Heart left ventricle (tissue), 16 donors: ENCODE measurements at regions of chr3 and their contacts with region 1.

Region 1: GRCh38 chr3:11601446-11602238 is 42.1 kb downstream of the VGLL4 start:
- DNase-seq: peak in 4 of 5 donors; percentile 68 to 73 (median 71)
- ATAC-seq: peak in 3 of 4 donors; percentile 47 to 59 (median 47)
- H3K4me3 ChIP-seq: peak overlapping the region in 1 of 12 donors; percentile 2
- H3K27ac ChIP-seq: peak overlapping the region in 11 of 12 donors; percentile 72 to 94 (median 81)
- H3K4me1 ChIP-seq: peaks cover 1 to 87% (median 64%) of the 10 kb centered on the region in 12 donors
- H3K27me3 ChIP-seq: no peaks in the 10 kb centered on the region
- CTCF ChIP-seq: no peak
- POLR2A ChIP-seq: no peak

Region 2: DNA sequence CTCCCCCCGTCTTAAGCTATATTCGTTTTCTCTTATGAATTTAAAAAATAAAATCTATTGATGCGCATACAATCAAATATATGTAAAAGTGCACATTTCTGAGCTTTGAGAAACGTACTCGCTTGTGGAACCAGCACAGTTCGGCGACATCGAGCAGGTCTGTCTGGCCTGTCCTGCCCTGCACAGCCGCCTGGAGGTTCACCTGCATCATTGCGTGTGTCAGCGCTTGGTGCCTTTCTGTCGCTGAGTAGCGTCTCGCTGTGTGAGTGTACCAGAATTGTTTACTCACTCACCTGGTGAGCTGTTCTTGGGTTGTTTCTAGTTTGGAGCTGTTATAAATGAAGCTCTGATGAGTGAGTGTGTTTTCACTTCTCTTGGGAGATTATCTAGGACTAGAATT is 62.0 kb before region 1 on chr3:
- intact Hi-C with region 1: no loop called
- DNase-seq: peak in 1 of 5 donors; percentile 52
- ATAC-seq: no peak
- H3K4me3 ChIP-seq: no peak overlapping the region
- H3K27ac ChIP-seq: no peak overlapping the region
- H3K4me1 ChIP-seq: peaks cover 0 to 11% (median 8%) of the 10 kb centered on the region in 12 donors
- H3K27me3 ChIP-seq: no peaks in the 10 kb centered on the region
- CTCF ChIP-seq: no peak
- POLR2A ChIP-seq: no peak

Region 3: GRCh38 chr3:11568503-11569155 is 33.0 kb before region 1 on chr3:
- intact Hi-C with region 1: loop called in 1 of 10 experiments (anchors 5 kb)
- DNase-seq: peak; percentile 79 to 90 (median 81)
- ATAC-seq: peak; percentile 37 to 76 (median 68)
- H3K4me3 ChIP-seq: peak overlapping the region in 9 of 12 donors; percentile 22 to 48 (median 32)
- H3K27ac ChIP-seq: peak overlapping the region; percentile 18 to 96 (median 86)
- H3K4me1 ChIP-seq: peaks cover 9 to 82% (median 59%) of the 10 kb centered on the region in 12 donors
- H3K27me3 ChIP-seq: no peaks in the 10 kb centered on the region
- CTCF ChIP-seq: no peak
- POLR2A ChIP-seq: no peak